ENCODE measurements at regions of chr17 and their contacts with region 1.

Region 1: DNA sequence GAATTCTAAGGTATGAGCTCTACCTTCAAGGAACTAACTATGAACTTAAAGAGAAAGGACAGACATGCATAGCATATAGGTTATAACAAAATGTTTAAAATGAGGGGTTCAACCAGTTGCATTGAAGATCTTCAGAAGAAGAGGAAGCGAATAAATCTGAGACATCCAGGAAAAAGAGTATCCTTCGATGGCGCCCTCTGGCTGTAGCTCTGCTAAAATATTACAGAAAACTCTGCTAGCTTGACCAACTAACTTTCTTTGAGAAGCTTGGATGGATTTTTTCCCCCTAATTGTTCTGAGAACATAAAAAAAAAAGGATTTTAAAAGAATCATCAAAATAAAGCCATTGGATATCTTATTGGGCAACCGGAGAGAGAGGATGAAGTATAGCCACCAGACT is 659.9 kb upstream of the SOX9 start:
- DNase-seq: no peak
- H3K4me3 ChIP-seq: no peak overlapping the region; a peak in 1 of 4 replicates
- H3K27ac ChIP-seq: no peak overlapping the region
- H3K4me1 ChIP-seq: no peaks in the 10 kb centered on the region; a peak in 2 of 4 replicates
- H3K27me3 ChIP-seq: no peaks in the 10 kb centered on the region
- CTCF ChIP-seq: peak; percentile 75
- EP300 ChIP-seq: no peak
- RAD21 ChIP-seq: peak; percentile 66

Region 2: GRCh38 chr17:71438631-71439146 is 22.3 kb before region 1 on chr17:
- CTCF ChIA-PET with region 1: interaction called, 11 read pairs
- POLR2A ChIA-PET with region 1: no interaction called
- DNase-seq: peak; percentile 56
- H3K4me3 ChIP-seq: no peak overlapping the region
- H3K27ac ChIP-seq: peak overlapping the region; percentile 78 to 86
- H3K4me1 ChIP-seq: peaks cover 12 to 24% of the 10 kb centered on the region in 2 experiments
- H3K27me3 ChIP-seq: no peaks in the 10 kb centered on the region
- CTCF ChIP-seq: peak; percentile 34
- EP300 ChIP-seq: peak; percentile 76 to 90; a peak in 3 of 4 replicates
- RAD21 ChIP-seq: peak; percentile 72

Region 3: DNA sequence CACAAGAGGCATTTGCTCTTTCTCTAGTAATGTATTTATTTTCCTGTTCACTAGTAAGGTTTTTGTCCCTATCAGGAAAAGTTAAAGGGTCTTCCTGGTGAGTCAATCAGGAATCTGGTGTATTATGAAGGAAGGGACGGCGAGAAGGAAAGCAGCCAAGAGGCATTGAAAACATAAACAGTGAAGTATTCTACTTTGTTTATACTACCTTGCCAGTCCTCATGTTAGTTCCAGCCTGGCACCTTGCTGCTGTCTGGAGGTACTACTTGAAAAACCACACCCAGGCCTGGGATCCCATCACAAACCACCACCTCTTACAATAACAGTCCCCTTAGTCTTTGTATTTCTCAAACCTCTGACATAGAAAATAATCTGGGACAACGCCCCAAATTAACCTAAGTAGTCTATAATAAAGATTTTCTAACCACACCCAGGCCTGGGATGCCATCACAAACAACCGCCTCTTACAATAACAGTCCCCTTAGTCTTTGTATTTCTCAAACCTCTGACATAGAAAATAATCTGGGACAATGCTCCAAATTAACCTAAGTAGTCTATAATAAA is 16.9 kb before region 1 on chr17:
- CTCF ChIA-PET with region 1: interaction called, 13 read pairs
- POLR2A ChIA-PET with region 1: no interaction called
- DNase-seq: no peak
- H3K4me3 ChIP-seq: no peak overlapping the region
- H3K27ac ChIP-seq: no peak overlapping the region
- H3K4me1 ChIP-seq: peaks cover 3 to 14% of the 10 kb centered on the region in 2 experiments; a peak in 3 of 4 replicates
- H3K27me3 ChIP-seq: no peaks in the 10 kb centered on the region
- CTCF ChIP-seq: no peak
- EP300 ChIP-seq: no peak
- RAD21 ChIP-seq: no peak